ENCODE measurements at regions of chr7 and their contacts with region 1.

Region 1: DNA sequence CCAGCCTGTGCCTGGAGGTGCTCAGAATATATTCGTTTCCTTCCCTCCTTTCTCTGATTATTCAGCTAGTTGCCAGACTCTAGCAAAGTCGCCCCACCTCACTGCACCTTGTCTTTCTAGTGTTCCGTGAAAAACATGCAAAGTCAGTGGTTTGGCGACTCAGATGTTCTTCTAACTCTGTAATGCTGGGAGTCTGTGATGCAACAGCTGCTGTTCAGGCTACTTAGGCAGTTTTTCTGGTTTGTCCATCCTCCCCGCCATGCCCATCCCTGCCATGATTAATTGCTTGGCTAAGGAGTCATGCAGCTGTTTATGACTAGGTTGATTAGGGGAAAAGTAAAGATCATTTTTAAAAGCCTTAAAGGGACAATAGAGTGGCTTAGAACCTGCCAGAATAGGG is 99.4 kb downstream of the MTPN start:
- DNase-seq: no peak

Region 2: GRCh38 chr7:135855846-135856245 is 22.0 kb before region 1 on chr7:
- intact Hi-C with region 1: loop called (anchors 1 kb)
- DNase-seq: no peak

Region 3: GRCh38 chr7:136183981-136184380 is 306.2 kb after region 1 on chr7:
- intact Hi-C with region 1: no loop called
- DNase-seq: peak in 1 of 10 donors; percentile 48